ENCODE measurements at regions of chr17 and their contacts with region 1.

Region 1: DNA sequence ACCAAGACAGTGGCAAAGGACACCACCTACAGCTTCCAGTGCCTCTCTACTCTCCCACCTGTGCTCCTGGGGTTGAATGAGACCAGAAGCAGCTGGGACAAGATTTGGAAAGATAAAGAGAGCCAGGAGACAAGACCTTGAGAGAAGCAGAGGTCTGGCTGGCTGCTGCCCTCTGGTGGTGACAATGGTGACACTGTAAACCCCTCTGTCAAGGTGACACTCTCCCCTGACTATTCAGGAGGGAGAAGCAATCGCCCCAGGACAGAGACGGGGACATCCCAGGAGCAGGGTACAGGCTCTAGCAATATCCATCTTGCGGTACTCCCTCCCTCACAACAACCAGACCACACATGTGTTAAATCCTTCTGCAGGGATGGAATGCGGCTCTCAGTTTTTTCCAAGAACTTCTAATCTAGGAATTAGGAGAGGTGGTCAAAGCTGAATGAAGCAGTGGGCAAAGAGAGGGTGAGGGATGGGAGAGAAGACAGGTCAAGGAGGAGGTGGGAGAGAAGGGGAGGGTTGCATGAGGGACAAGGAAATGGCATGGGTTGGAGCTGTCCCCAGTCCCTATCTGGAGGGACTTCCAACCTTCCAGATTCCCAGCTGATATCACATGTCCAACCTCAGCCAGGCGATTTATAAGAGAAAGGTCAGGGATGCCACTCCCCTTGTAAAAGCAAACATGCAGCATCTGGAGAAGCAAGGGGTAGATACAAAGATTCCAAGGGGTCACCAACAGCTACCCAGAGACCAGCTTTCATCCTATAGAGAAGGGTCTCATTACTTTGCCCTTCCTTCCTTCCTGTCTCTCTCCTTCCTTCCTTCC is 2.9 kb downstream of the PHOSPHO1 start:
- DNase-seq: peak; percentile 67 to 86 (median 76)
- ATAC-seq: peak in 3 of 4 donors; percentile 46 to 53 (median 52)
- H3K4me3 ChIP-seq: no peak overlapping the region
- H3K27ac ChIP-seq: no peak overlapping the region
- H3K4me1 ChIP-seq: peaks cover 0 to 53% (median 30%) of the 10 kb centered on the region in 12 donors
- H3K27me3 ChIP-seq: peaks cover 11 to 36% (median 26%) of the 10 kb centered on the region in 9 donors
- CTCF ChIP-seq: peak; percentile 71 to 88 (median 82)
- POLR2A ChIP-seq: no peak

Region 2: GRCh38 chr17:49170216-49170615 is 57.4 kb before region 1 on chr17:
- intact Hi-C with region 1: loop called in 1 of 10 experiments (anchors 10 kb)
- DNase-seq: no peak
- ATAC-seq: no peak
- H3K4me3 ChIP-seq: no peak overlapping the region
- H3K27ac ChIP-seq: no peak overlapping the region
- H3K4me1 ChIP-seq: no peaks in the 10 kb centered on the region
- H3K27me3 ChIP-seq: peaks cover 3 to 54% (median 14%) of the 10 kb centered on the region in 9 donors
- CTCF ChIP-seq: no peak
- POLR2A ChIP-seq: no peak

Region 3: GRCh38 chr17:49191917-49192741 is 35.5 kb before region 1 on chr17:
- intact Hi-C with region 1: loop called in 4 of 10 experiments (anchors 5 kb)
- DNase-seq: peak; percentile 88 to 94 (median 91)
- ATAC-seq: peak; percentile 87 to 92 (median 90)
- H3K4me3 ChIP-seq: peak overlapping the region; percentile 59 to 95 (median 80)
- H3K27ac ChIP-seq: peak overlapping the region; percentile 92 to 99 (median 98)
- H3K4me1 ChIP-seq: peaks cover 0 to 23% (median 3%) of the 10 kb centered on the region in 12 donors
- H3K27me3 ChIP-seq: no peaks in the 10 kb centered on the region
- CTCF ChIP-seq: peak in 9 of 12 donors; percentile 17 to 61 (median 33)
- POLR2A ChIP-seq: peak in 1 of 2 donors; percentile 7

Region 4: DNA sequence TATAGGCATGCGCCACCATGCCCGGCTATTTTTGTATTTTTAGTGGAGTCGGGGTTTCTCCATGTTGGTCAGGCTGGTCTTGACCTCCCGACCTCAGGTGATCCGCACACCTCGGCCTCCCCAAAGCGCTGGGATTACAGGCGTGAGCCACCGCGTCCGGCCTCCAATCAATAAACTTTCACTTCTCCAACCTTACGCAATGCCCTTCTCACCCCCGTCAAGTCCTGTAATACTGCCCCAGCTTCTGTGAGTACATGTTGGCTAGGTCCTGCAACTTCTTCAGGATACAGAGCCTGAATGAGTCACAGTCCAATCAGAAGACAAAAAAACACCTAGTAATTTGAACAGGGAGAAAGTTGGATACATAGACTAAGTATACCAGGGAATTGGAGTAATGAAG is 50.0 kb after region 1 on chr17:
- intact Hi-C with region 1: loop called in 1 of 10 experiments (anchors 5 kb)
- DNase-seq: no peak
- ATAC-seq: no peak
- H3K4me3 ChIP-seq: no peak overlapping the region
- H3K27ac ChIP-seq: no peak overlapping the region
- H3K4me1 ChIP-seq: no peaks in the 10 kb centered on the region
- H3K27me3 ChIP-seq: no peaks in the 10 kb centered on the region
- CTCF ChIP-seq: no peak
- POLR2A ChIP-seq: no peak

Region 5: GRCh38 chr17:49290690-49291359 is 63.2 kb after region 1 on chr17:
- intact Hi-C with region 1: loop called (anchors 2 to 10 kb)
- DNase-seq: no peak
- ATAC-seq: peak in 2 of 4 donors; percentile 41 to 45
- H3K4me3 ChIP-seq: no peak overlapping the region
- H3K27ac ChIP-seq: no peak overlapping the region
- H3K4me1 ChIP-seq: no peaks in the 10 kb centered on the region
- H3K27me3 ChIP-seq: no peaks in the 10 kb centered on the region
- CTCF ChIP-seq: peak; percentile 60 to 83 (median 72)
- POLR2A ChIP-seq: no peak

Measured in heart left ventricle (tissue), 16 donors.